ENCODE measurements at regions of chr11 and their contacts with region 1.

Region 1: DNA sequence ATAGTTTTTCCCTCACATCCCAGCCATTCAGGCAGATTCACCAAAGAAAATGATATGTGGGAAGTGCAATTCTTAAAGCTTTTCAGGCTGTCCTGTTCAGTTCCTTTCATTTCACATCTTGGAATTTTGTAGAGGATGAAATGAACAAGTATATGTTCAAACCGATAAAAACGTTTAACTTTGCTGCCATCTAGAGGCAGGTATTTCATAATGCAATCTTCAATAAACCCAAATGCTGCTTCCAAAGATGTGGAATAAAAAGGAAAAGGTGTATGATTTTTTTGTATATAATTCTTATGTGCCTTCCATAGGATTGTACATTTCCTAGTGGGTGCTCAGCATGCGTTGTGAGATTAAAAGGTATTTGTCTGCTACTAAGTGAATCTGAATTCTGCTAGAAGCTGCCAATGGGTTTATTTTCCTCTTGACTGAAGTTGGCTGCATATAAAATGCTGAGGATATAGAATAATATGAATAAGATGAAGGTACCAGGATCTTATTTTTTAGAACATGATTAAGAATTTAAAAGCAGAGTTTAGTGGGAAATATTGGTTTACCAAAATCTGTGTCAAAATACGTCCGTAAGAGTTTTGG is 199.3 kb downstream of the PGR start:
- DNase-seq: no peak
- ATAC-seq: peak; percentile 44 to 55

Region 2: GRCh38 chr11:100575870-100576705 is 354.2 kb before region 1 on chr11:
- intact Hi-C with region 1: loop called (anchors 5 to 10 kb)
- DNase-seq: no peak
- ATAC-seq: peak; percentile 67 to 73

Region 3: GRCh38 chr11:100581318-100581717 is 349.0 kb before region 1 on chr11:
- intact Hi-C with region 1: loop called (anchors 5 to 10 kb)
- DNase-seq: no peak
- ATAC-seq: no peak

Region 4: DNA sequence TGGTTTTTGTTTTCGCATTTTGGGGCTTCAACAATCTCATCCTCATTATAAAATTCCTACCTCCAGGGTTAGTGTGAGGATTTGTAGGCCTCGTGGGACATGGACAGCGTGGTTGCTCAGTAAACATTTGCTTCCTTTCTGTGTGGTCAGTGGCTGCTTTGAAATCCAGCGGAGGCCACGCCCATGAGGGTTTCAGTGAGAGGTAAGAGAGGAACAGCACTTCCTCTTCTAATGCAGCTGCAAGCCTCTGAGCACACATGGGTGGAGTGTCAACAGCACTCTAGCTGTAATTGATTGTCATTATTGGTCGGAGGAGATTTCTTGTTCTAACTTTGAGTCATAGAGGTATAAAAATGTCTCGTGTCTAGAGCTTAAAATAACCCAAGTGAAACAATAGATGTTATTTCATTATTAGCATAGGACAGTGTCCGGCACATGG is 249.2 kb before region 1 on chr11:
- intact Hi-C with region 1: loop called (anchors 5 to 10 kb)
- DNase-seq: peak; percentile 46
- ATAC-seq: peak; percentile 38 to 60

Region 5: DNA sequence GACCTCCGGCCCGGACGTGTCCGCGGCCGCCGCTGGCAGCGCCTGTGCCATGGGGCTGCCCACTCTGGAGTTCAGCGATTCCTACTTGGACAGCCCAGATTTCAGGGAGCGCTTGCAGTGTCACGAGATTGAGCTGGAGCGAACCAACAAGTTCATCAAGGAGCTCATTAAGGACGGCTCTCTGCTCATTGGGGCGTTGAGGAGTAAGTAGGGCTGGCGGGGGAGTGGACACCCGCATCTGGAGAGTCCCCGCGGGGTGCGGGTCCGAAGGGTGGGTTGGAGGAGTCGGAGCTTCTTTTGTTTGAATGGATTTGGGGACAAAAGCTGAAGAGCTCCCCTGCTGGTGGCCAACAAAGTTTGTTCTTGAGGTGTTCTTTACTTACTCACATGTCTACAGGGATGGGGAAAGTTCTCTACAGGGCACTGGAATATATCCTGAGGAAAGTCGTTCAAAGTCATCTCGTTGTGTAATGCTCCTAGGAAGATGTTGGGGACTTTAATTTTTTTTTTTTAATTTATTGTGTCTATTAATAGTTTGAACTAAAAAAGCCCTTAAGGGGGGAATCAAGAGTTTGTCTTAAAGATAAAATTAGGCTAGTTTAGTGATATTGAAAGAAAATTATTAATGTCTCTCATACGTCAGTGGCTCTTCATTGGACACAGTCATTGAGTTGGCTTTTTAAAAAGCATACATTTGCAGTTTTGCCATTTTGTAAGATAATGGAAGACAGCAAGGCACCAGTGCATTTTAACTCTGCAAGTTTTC is 242.5 kb before region 1 on chr11:
- intact Hi-C with region 1: loop called (anchors 5 to 10 kb)
- DNase-seq: peak; percentile 49
- ATAC-seq: peak; percentile 74 to 77

Region 6: DNA sequence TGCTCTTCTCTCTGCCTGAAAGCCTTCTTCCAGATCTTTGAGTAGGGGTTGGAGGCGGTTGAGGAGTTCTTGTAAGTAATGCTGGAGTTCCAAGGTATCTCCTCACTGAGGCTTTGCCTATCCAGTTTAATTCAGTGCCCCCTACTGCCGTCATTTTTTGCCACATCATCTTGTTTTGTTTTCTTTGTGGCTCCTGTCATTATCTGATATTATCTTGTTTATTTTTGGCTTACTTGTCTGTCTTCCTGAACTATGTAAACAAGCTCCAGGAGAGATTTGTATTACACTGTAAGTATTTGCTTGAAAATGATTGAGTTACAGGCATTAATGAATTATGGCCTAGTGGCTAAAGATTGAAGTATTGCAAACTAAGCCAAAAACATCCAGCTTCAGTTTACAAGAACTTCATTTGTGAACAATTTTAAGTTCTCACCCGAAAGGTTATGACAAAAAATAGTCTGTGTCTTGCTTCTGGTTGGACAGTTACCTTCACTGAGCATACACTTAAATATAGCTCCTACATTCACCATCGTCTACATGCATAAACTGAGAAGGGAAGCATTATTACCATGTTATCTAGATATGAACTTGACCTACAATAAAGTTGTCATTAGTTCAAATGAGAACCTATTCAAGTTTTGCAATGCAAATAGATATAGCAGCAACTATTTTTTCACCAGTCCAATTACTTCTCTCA is 88.4 kb before region 1 on chr11:
- intact Hi-C with region 1: no loop called
- DNase-seq: no peak
- ATAC-seq: no peak

Region 7: DNA sequence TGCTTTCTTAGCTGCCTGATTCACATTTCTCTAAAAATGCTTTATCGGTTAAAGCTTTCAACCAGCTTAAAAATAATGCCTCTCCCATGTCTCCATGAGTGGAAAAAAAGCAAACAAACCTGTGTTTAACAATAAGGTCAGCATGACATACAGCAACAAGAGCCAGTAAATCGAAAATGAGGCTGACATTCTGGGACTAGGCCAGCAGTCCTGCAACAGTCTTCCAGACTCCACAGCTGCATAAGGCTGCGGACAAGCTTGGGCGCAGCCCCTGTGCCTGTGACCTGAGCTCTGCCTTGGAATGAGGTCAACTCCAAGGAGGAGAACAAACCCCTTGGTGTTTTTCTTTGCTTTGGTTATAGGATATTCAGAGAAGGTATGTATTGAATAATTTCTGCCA is 103.8 kb after region 1 on chr11:
- intact Hi-C with region 1: no loop called
- DNase-seq: peak; percentile 66
- ATAC-seq: peak; percentile 93 to 94